ENCODE measurements at regions of chr18 and their contacts with region 1.

Region 1: DNA sequence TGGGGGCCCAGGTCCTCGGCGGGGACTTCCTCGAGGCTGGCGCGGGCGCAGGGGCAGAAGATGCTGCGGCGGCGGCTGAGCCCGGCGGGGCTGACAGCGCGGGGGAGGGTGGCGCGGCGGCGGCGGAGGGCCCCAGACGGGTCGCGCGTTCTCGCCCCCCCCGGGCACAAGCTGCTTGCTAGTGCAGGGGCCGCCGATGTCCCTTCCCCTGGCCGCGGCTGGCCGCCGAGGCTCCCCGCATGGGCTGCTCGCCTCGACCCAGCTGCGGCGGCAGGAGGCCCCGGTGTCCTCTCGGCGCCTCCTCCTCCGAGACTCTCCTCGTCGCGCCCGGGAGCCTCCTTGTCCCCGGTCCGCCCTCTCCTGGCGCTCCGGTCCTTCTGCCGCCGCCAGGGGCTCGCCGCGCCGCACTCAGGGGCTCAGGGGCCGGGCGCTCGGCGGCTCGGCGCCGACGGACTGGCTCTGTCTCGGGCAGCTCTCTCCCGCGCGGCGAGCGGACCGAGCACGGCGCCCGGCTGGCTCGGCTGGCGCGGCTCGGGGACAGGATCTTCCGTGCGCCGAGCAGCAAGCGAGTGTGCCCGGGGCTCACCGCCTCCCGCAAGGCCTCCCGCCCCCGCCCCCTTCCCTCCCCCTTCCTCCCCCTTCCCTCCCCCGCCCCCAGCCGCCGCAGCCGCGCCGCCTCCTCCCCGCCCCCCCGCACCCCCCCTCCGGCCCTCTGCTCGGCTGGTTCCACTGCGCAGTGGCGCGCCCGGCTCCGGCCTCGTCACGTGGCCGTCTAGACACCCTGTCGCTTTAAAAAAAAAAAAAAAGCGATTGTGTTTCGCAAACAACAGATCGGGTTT is 902 bp upstream of the SMAD7 start:
- DNase-seq: no peak
- ATAC-seq: peak; percentile 64
- H3K4me3 ChIP-seq: peak overlapping the region; percentile 92
- H3K27ac ChIP-seq: peak overlapping the region; percentile 64
- H3K4me1 ChIP-seq: peaks cover 10% of the 10 kb centered on the region
- H3K27me3 ChIP-seq: no peaks in the 10 kb centered on the region
- CTCF ChIP-seq: peak in 2 of 3 experiments; percentile 21 to 22; a peak in 3 of 6 replicates
- EP300 ChIP-seq: 0 out of 4 replicates have a peak, but pooled peaks of 1 of the 2 experiments have one; percentile 13
- POLR2A ChIP-seq: peak; percentile 86
- RAD21 ChIP-seq: 0 out of 2 replicates have a peak, but pooled peaks have one; percentile 23

Region 2: DNA sequence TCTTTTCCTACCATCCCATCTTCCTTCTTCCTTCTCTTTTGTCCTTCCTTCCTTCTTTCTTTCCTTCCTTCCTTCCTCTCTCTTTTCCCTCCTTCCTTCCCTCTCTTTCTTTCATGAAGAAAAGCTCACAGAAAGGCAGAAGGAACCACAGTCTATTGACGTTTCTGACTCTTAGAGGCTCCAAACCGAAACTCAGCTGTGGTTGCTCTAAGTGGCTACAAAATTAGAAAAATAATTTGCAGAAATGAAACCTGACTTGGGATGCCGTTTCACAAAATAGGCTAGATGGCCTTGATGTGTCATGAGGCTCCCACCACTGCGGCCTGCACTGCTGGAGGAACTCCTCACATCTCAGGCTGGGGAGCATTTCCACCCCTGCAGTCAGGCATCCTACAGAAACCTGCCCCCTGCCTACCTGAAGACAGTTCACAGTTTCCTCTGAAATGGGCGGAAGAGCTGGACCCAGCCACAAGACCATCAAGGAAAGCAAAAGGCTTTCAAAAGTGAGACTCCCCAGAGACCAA is 166.5 kb before region 1 on chr18:
- CTCF ChIA-PET with region 1: no interaction called
- POLR2A ChIA-PET with region 1: interaction called, 6 read pairs
- RAD21 ChIA-PET with region 1: interaction called, 29 read pairs
- SMC1A ChIA-PET with region 1: interaction called, 23 read pairs
- in situ Hi-C with region 1: no loop called
- intact Hi-C with region 1: loop called (anchors 2 kb)
- DNase-seq: peak; percentile 94
- ATAC-seq: peak; percentile 94
- H3K4me3 ChIP-seq: peak overlapping the region; percentile 54; the same call in 1 of the 2 replicates
- H3K27ac ChIP-seq: peak overlapping the region; percentile 91
- H3K4me1 ChIP-seq: peaks cover 47% of the 10 kb centered on the region
- H3K27me3 ChIP-seq: no peaks in the 10 kb centered on the region
- CTCF ChIP-seq: no peak
- EP300 ChIP-seq: peak; percentile 85 to 87; a peak in 2 of 4 replicates
- POLR2A ChIP-seq: 0 out of 2 replicates have a peak, but pooled peaks have one; percentile 27
- RAD21 ChIP-seq: peak; percentile 23; the same call in 1 of the 2 replicates

Region 3: GRCh38 chr18:48834413-48835031 is 117.1 kb before region 1 on chr18:
- CTCF ChIA-PET with region 1: interaction called, 4 read pairs
- POLR2A ChIA-PET with region 1: interaction called, 3 read pairs
- RAD21 ChIA-PET with region 1: interaction called, 7 read pairs
- SMC1A ChIA-PET with region 1: interaction called, 30 read pairs
- in situ Hi-C with region 1: no loop called
- intact Hi-C with region 1: loop called (anchors 2 kb)
- DNase-seq: peak; percentile 81
- ATAC-seq: peak; percentile 84
- H3K4me3 ChIP-seq: peak overlapping the region; percentile 70
- H3K27ac ChIP-seq: peak overlapping the region; percentile 93
- H3K4me1 ChIP-seq: peaks cover 41% of the 10 kb centered on the region
- H3K27me3 ChIP-seq: no peaks in the 10 kb centered on the region
- CTCF ChIP-seq: no peak
- EP300 ChIP-seq: no peak
- POLR2A ChIP-seq: peak; percentile 38
- RAD21 ChIP-seq: no peak

Region 4: DNA sequence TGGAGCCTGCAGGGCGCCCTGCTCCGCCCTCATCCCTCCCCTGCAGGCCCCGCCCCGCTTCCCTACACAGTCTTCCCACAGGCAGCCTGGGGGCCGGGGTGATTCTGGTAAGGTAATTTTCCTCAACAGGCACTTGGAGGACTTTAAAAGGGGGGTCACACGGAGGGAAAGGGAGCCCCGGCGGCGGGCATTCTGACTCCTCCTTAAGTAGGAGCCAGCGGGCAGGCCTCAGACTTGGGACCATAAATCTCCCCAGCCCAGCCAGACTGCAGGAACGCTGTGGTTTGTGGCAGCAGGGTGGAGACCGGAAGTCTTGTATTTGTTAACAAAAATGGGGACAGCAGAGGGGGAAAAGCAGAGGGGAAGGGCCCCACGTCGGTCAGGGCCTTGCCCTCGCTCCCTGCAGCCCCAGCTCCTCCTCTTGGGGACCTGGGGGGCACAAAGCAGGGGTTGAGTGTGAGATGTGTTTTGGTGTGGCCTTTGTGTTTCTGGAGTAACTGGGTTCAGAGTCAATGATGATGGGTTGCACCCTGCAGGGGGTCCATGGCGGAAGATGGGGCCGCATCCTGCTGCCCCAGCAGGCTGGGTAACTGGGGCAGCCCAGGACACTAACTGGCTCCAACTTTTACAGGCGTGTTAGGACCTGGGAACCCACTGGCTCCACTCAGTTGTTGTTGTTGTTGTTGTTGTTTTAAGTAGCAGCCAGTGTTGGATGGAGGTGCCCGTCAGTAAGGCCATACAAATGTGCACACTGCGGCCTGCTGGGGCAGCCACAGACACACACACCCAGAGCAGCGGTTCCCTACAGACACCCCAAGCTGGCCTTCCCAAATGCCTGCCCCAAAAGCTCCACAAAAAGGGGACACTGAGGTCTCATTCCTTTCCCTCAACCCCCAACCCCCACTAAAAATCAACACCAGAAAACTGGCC is 28.6 kb before region 1 on chr18:
- CTCF ChIA-PET with region 1: interaction called, 4 read pairs
- POLR2A ChIA-PET with region 1: interaction called, 71 read pairs
- RAD21 ChIA-PET with region 1: interaction called, 5 read pairs
- SMC1A ChIA-PET with region 1: interaction called, 55 read pairs
- in situ Hi-C with region 1: no loop called
- intact Hi-C with region 1: no loop called
- DNase-seq: no peak
- ATAC-seq: no peak
- H3K4me3 ChIP-seq: peak overlapping the region; percentile 23; the same call in 1 of the 2 replicates
- H3K27ac ChIP-seq: peak overlapping the region; percentile 47
- H3K4me1 ChIP-seq: peaks cover 52% of the 10 kb centered on the region
- H3K27me3 ChIP-seq: no peaks in the 10 kb centered on the region
- CTCF ChIP-seq: no peak
- EP300 ChIP-seq: no peak
- POLR2A ChIP-seq: no peak
- RAD21 ChIP-seq: no peak

Region 5: GRCh38 chr18:48934723-48935432 is 16.8 kb before region 1 on chr18:
- CTCF ChIA-PET with region 1: interaction called, 8 read pairs
- POLR2A ChIA-PET with region 1: interaction called, 71 read pairs
- RAD21 ChIA-PET with region 1: interaction called, 41 read pairs
- SMC1A ChIA-PET with region 1: interaction called, 55 read pairs
- in situ Hi-C with region 1: no loop called
- intact Hi-C with region 1: no loop called
- DNase-seq: peak; percentile 71
- ATAC-seq: peak; percentile 71
- H3K4me3 ChIP-seq: peak overlapping the region; percentile 57
- H3K27ac ChIP-seq: peak overlapping the region; percentile 96
- H3K4me1 ChIP-seq: peaks cover 68% of the 10 kb centered on the region
- H3K27me3 ChIP-seq: no peaks in the 10 kb centered on the region
- CTCF ChIP-seq: no peak
- EP300 ChIP-seq: no peak; a peak in 1 of 4 replicates
- POLR2A ChIP-seq: peak; percentile 62; the same call in 1 of the 2 replicates
- RAD21 ChIP-seq: no peak

Region 6: GRCh38 chr18:49161627-49162026 is 210.0 kb after region 1 on chr18:
- CTCF ChIA-PET with region 1: interaction called, 3 read pairs
- POLR2A ChIA-PET with region 1: interaction called, 3 read pairs
- RAD21 ChIA-PET with region 1: interaction called, 3 read pairs
- SMC1A ChIA-PET with region 1: interaction called, 4 read pairs
- in situ Hi-C with region 1: no loop called
- intact Hi-C with region 1: loop called (anchors 5 kb)
- DNase-seq: peak; percentile 90
- ATAC-seq: peak; percentile 96
- H3K4me3 ChIP-seq: no peak overlapping the region
- H3K27ac ChIP-seq: peak overlapping the region; percentile 71
- H3K4me1 ChIP-seq: peaks cover 35% of the 10 kb centered on the region
- H3K27me3 ChIP-seq: no peaks in the 10 kb centered on the region
- CTCF ChIP-seq: no peak
- EP300 ChIP-seq: peak; percentile 97 to 99
- POLR2A ChIP-seq: no peak
- RAD21 ChIP-seq: no peak

Region 7: DNA sequence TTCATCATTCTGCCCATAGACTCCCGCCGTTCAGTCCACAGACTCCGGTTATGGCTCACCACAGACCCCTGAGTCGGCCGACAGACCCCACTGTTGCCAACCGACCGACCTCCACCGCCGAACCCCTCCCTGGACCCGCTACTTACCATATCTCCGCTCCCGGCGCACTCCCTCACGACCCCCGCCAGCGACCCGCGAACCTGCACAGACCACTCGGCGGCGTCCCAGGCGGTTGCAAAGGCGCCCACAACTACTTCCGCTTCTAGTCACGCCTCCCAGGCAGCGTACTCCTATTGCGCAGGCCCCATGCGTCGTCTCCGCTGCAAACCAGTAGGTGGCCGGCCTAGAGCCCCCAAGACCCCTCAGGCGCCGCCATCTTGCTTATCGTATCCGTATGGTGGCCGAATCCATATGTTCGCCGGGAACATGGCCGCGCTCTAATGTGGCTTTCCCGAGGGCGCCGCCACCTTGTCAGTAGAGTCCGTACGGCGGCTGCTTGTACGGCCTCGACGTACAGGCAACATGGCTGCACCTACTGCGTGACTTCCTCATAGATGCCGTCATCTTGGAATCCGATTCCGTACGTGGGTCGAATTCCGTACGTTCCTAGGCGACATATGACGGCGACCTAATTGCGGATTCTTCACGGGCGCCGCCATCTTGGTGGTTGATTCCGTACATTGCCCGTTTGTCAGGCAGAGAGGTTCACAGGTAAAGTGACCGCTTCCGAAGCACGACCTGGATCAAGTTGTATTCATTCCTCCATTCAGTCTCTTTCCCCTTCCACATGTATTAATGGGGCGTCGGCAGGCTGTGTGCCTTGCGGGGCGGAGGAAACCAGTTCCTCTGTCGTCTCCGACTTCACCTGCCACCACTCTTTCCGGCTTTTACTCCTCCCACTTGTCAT is 1336.0 kb after region 1 on chr18 and contains the start of gene CXXC1:
- CTCF ChIA-PET with region 1: no interaction called
- POLR2A ChIA-PET with region 1: no interaction called
- RAD21 ChIA-PET with region 1: no interaction called
- SMC1A ChIA-PET with region 1: no interaction called
- in situ Hi-C with region 1: loop called (anchors 25 kb)
- intact Hi-C with region 1: loop called (anchors 10 kb)
- DNase-seq: peak; percentile 99
- ATAC-seq: peak; percentile 97
- H3K4me3 ChIP-seq: peak within 1 kb of the TSS; percentile 97
- H3K27ac ChIP-seq: peak within 1 kb of the TSS; percentile 73
- H3K4me1 ChIP-seq: peaks cover 9% of the 10 kb centered on the region
- H3K27me3 ChIP-seq: no peaks in the 10 kb centered on the region
- CTCF ChIP-seq: peak; percentile 50 to 64 (median 51)
- EP300 ChIP-seq: no peak
- POLR2A ChIP-seq: no peak
- RAD21 ChIP-seq: peak; percentile 44; the same call in 1 of the 2 replicates
- polyA plus RNA-seq, gene CXXC1: 9.2 to 17.0 TPM

Measured in GM12878 (cell line).